Activated T-helper 1 cell treated with anti-CD3 and anti-CD28 coated beads, Interleukin-12 subunit alpha, Interleukin-12 subunit beta, Interleukin-2, Interleukin-4 antibody, amounts not matched to agents 30 ng/mL and 10 ng/mL and 1 ng/mL, durations not matched to agents 14 hours and 24 hours and 36 hours (primary cell): ENCODE measurements at regions of chr4 and their contacts with region 1.

Region 1: GRCh38 chr4:129822708-129823504 is 727.0 kb downstream of the C4orf33 start:
- DNase-seq: no peak
- H3K4me3 Mint-ChIP-seq: no peak overlapping the region
- H3K27ac Mint-ChIP-seq: no peak overlapping the region
- H3K4me1 Mint-ChIP-seq: no peaks in the 10 kb centered on the region
- H3K27me3 Mint-ChIP-seq: no peaks in the 10 kb centered on the region

Region 2: DNA sequence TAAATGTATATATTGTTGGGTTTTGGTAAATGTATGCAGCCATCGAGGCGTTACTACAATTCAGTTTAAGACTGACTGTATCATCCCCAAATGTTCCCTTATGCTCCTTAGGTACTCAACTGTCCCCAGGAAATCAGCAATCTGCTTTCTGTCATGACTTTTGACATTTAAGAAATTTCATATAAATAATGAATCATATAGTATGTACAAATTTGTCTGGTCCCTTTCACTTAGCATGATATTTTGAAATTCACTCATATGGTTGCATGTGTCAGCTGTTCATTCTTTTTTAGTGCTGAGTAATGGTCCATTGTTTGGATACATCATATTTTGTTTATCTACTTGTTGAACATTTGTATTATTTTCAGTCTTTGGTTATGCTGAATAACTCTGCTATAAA is 508.1 kb before region 1 on chr4:
- intact Hi-C with region 1: loop called (anchors 5 kb)
- DNase-seq: no peak
- H3K4me3 Mint-ChIP-seq: no peak overlapping the region
- H3K27ac Mint-ChIP-seq: no peak overlapping the region
- H3K4me1 Mint-ChIP-seq: no peaks in the 10 kb centered on the region
- H3K27me3 Mint-ChIP-seq: peaks cover 3% of the 10 kb centered on the region